ENCODE measurements at regions of chr6 and their contacts with region 1.

Region 1: GRCh38 chr6:134938896-134939295 is 11.0 kb downstream of the ALDH8A1 start:
- DNase-seq: no peak
- ATAC-seq: no peak
- H3K4me3 ChIP-seq: no peak overlapping the region
- H3K27ac ChIP-seq: no peak overlapping the region
- H3K4me1 ChIP-seq: no peaks in the 10 kb centered on the region; a peak in 1 of 5 replicates
- H3K27me3 ChIP-seq: peaks cover 0 to 2% of the 10 kb centered on the region in 2 experiments; a peak in 1 of 5 replicates
- CTCF ChIP-seq: no peak
- EP300 ChIP-seq: no peak
- POLR2A ChIP-seq: no peak
- RAD21 ChIP-seq: no peak

Region 2: DNA sequence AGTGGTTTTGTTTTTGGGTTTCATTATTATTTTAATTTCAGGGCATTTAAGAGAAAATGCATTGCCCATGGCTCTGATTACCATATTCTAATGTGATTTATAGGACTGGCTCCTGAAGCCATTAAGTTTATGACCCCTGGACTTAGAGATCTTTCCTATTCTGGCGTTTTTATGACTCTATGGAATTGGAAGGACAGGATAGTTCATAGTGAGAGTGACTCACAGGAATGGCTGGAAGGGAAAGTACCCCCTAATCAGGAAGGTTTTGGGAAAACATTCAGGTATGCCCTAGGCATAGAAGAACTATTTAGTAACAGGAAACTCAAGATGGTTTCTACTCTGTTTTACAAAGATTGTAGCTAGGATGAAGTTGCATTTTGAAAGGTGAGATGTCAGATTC is 777.9 kb before region 1 on chr6:
- CTCF ChIA-PET with region 1: interaction called, 13 read pairs
- POLR2A ChIA-PET with region 1: no interaction called
- in situ Hi-C with region 1: loop called (anchors 5 kb)
- intact Hi-C with region 1: loop called (anchors 5 kb)
- DNase-seq: no peak
- ATAC-seq: no peak; the same call in 2 of the 3 replicates
- H3K4me3 ChIP-seq: no peak overlapping the region
- H3K27ac ChIP-seq: no peak overlapping the region
- H3K4me1 ChIP-seq: no peaks in the 10 kb centered on the region
- H3K27me3 ChIP-seq: no peaks in the 10 kb centered on the region
- CTCF ChIP-seq: no peak
- EP300 ChIP-seq: no peak
- POLR2A ChIP-seq: no peak
- RAD21 ChIP-seq: no peak

Region 3: GRCh38 chr6:134888316-134888715 is 50.6 kb before region 1 on chr6:
- CTCF ChIA-PET with region 1: no interaction called
- POLR2A ChIA-PET with region 1: no interaction called
- in situ Hi-C with region 1: no loop called
- intact Hi-C with region 1: loop called (anchors 5 kb)
- DNase-seq: no peak
- ATAC-seq: no peak
- H3K4me3 ChIP-seq: no peak overlapping the region
- H3K27ac ChIP-seq: no peak overlapping the region
- H3K4me1 ChIP-seq: no peaks in the 10 kb centered on the region
- H3K27me3 ChIP-seq: peaks cover 13 to 23% of the 10 kb centered on the region in 2 experiments
- CTCF ChIP-seq: no peak
- EP300 ChIP-seq: no peak
- POLR2A ChIP-seq: no peak
- RAD21 ChIP-seq: no peak

Region 4: DNA sequence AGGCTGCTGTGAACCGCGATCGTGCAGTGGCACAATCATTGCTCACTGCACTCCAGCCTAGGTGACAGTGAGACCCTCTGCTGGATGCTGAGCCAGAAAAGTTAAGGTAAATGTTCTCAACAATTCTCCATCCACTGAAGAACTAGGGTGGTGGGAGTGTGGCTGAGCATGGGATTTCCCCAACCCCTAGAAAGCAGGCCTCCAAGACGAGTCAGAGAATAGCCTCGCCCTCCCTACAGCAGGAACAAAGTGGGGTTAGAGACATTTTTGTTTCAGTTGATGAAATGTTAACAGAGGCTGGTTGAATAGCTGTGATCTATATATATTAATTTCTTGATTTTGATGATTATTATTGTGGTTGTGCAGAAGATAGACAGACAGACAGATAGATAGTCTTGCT is 17.1 kb after region 1 on chr6:
- CTCF ChIA-PET with region 1: no interaction called
- POLR2A ChIA-PET with region 1: no interaction called
- in situ Hi-C with region 1: no loop called
- intact Hi-C with region 1: no loop called
- DNase-seq: no peak
- ATAC-seq: peak; percentile 15
- H3K4me3 ChIP-seq: no peak overlapping the region
- H3K27ac ChIP-seq: no peak overlapping the region
- H3K4me1 ChIP-seq: no peaks in the 10 kb centered on the region
- H3K27me3 ChIP-seq: no peaks in the 10 kb centered on the region
- CTCF ChIP-seq: no peak
- EP300 ChIP-seq: no peak
- POLR2A ChIP-seq: no peak
- RAD21 ChIP-seq: no peak

Measured in K562 (cell line).